Calu3 (cell line): ENCODE measurements at regions of chr2 and their contacts with region 1.

Region 1: GRCh38 chr2:172813314-172813888 is 77.8 kb downstream of the RAPGEF4 start:
- DNase-seq: no peak
- H3K4me3 Mint-ChIP-seq: no peak overlapping the region
- H3K27ac Mint-ChIP-seq: no peak overlapping the region
- H3K4me1 Mint-ChIP-seq: no peaks in the 10 kb centered on the region
- H3K27me3 Mint-ChIP-seq: peaks cover 25% of the 10 kb centered on the region
- CTCF ChIP-seq: peak; percentile 32

Region 2: GRCh38 chr2:172858473-172858745 is 45.0 kb after region 1 on chr2:
- CTCF ChIA-PET with region 1: interaction called, 4 read pairs
- intact Hi-C with region 1: loop called (anchors 2 kb)
- DNase-seq: no peak
- H3K4me3 Mint-ChIP-seq: no peak overlapping the region
- H3K27ac Mint-ChIP-seq: no peak overlapping the region
- H3K4me1 Mint-ChIP-seq: peaks cover 19% of the 10 kb centered on the region
- H3K27me3 Mint-ChIP-seq: peaks cover 12% of the 10 kb centered on the region
- CTCF ChIP-seq: no peak

Region 3: DNA sequence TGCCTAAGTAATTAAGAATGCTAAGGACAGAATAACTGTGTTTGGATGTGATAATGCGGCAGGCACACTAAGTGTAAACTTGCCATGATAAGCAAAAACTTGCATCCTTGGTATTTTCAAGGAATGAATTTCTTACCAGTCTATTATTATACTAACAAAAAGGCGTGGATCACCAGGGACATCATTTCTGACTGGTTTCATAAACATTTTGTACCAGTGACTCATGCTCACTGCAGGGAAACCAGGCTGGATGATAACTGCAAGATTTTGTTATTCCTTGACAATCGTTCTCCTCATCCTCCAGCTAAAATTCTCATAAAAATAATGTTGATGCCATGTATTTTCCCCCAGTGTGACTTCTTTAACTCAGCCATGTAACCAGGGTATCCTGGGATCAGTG is 830.7 kb after region 1 on chr2:
- CTCF ChIA-PET with region 1: no interaction called
- intact Hi-C with region 1: no loop called
- DNase-seq: no peak
- H3K4me3 Mint-ChIP-seq: no peak overlapping the region
- H3K27ac Mint-ChIP-seq: no peak overlapping the region
- H3K4me1 Mint-ChIP-seq: no peaks in the 10 kb centered on the region
- H3K27me3 Mint-ChIP-seq: no peaks in the 10 kb centered on the region
- CTCF ChIP-seq: no peak